ENCODE measurements at regions of chr2 and their contacts with region 1.

Region 1: DNA sequence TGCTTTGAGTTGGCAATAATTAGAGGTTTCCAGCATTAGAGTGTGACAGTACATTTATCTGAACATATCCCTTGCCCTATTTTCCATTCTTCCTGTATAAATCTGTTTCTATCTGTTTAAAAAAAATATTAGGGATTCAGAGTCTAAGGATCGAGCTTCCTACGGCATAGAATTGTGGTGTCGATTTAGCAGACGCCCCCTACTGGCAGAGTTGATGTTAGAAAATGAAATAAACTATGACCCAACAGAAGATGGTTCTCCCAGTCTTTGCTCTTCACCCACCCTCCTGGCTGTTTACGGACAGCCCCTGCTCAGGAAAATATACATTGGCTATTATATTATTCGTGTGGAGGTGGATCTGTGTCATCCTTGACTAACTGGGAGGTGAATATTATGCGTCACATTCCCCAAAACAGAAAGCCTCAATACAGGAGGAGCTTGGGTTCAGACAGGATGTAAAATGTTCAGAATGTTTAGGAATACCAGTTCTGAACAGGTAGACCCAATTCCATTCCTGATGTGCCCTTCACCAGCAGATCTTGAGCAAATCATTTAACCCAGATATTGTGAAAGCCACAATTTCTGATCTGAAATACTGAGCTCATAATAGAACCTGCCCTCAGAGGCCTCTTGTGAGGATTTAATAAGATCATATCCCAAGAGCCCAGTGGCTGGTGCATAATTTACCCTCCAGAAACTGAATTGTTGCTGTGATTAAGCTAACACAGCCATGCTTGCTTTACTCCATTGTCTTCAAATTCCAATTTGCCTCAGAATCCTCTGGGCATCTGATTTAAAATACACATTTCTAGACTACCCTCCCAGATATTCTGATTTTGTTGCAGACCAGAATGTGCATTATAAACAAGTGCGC is 10.8 kb upstream of the ERMN start:
- DNase-seq: no peak
- H3K4me3 ChIP-seq: no peak overlapping the region
- CTCF ChIP-seq: peak; percentile 45

Region 2: DNA sequence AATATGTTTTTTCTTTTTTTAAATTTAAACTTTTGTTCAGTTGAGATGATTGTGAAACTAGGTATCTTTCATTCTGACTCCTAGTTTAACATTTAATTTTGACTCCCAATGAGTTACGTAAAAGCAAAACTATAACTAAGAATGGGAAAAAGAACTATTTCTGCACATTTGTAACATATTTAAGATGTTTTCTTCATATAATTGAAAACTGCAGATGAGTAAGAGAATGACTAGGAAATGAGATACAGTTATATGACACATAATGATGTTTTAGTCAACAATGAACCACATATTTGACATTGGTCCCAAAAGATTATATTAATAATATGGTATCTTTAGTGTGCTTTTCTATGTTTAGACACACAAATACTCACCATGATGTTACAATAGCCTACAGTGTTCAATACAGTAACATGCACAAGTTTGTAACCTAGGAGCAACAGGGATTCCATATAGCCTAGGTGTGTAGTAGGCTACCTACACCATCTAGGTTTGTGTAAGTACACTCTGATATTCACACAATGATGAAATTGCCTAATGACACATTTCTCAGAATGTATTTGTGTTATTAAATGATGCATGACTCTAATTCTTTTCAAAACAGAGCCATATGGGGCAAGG is 23.4 kb before region 1 on chr2:
- CTCF ChIA-PET with region 1: interaction called, 370 read pairs
- POLR2A ChIA-PET with region 1: no interaction called
- DNase-seq: no peak
- H3K4me3 ChIP-seq: no peak overlapping the region
- CTCF ChIP-seq: no peak

Region 3: GRCh38 chr2:157349949-157350515 is 13.7 kb after region 1 on chr2:
- CTCF ChIA-PET with region 1: interaction called, 56 read pairs
- POLR2A ChIA-PET with region 1: no interaction called
- DNase-seq: no peak
- H3K4me3 ChIP-seq: no peak overlapping the region
- CTCF ChIP-seq: no peak

Region 4: DNA sequence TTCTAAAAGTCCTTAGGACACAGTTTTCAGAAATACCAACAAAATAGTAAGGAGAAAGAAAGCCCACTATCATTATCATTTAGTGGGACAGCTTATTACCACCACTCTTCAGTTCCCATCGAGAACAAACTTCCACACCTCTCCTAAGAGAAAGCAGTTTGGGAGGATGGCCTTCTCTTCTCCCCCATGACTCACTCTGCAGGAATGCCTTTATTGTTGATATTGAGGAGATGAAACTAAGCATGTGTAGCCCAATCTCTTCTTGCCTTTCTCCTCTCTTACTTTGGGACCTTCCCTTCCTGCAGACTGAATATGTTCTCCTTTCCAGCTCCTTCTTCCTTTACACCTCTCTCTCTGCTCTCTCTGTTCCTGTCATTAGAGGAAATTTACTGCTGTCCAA is 19.2 kb after region 1 on chr2:
- CTCF ChIA-PET with region 1: interaction called, 11 read pairs
- POLR2A ChIA-PET with region 1: no interaction called
- DNase-seq: no peak
- H3K4me3 ChIP-seq: no peak overlapping the region
- CTCF ChIP-seq: no peak

Region 5: DNA sequence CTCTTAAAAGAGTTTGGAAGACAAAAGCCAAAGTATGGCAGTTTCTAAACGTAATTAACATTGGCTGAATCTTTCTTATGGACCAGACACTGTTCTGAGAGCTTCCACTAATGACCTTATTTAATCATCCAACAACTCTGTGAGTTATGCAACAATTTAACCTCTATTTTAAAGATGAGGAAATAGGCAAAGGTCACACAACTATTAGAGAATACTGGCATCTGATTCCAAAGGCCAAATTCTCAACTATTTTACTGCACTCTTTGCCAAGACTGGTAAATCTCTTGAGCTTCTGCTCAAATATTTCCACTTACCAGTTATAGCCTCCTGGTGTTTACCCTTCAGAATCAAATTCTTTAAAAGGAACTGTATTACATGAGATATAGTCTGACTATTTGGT is 31.3 kb after region 1 on chr2:
- CTCF ChIA-PET with region 1: interaction called, 10 read pairs
- POLR2A ChIA-PET with region 1: no interaction called
- DNase-seq: no peak
- H3K4me3 ChIP-seq: no peak overlapping the region
- CTCF ChIP-seq: no peak

Region 6: DNA sequence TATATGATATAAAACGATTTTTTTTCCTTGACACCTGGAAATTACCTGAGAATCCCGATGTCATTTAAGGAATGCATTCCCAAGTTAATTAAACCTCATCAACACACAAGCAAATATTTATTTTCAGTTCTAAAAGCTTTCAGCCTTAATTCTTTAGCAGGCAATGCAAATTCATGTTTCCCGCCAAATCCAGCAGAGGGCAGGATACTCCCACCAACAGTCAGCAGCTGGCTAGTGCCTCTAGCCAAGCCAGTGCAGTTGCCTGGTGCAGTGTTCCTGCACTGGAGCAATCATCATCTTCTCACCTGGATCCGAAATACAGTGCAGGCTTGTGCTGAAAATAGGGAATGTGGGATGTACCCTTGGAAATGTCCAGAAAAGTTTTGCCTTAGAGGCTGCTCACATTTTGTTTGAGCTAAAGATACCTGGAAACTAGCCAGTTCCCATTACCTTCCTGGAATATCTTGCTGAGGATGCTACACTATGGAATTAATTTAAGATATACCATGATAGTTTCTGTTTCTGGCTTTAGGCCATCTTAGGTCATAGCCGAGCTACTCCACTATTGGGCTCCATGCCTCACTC is 155.9 kb after region 1 on chr2:
- CTCF ChIA-PET with region 1: interaction called, 15 read pairs
- POLR2A ChIA-PET with region 1: no interaction called
- DNase-seq: no peak
- H3K4me3 ChIP-seq: no peak overlapping the region
- CTCF ChIP-seq: peak; percentile 73